ENCODE measurements at regions of chr3 and their contacts with region 1.

Region 1: GRCh38 chr3:107740992-107741896 is 218.5 kb downstream of the BBX start:
- DNase-seq: no peak
- H3K4me3 Mint-ChIP-seq: no peak overlapping the region
- H3K27ac Mint-ChIP-seq: no peak overlapping the region
- H3K4me1 Mint-ChIP-seq: no peaks in the 10 kb centered on the region
- H3K27me3 Mint-ChIP-seq: no peaks in the 10 kb centered on the region
- CTCF ChIP-seq: no peak

Region 2: DNA sequence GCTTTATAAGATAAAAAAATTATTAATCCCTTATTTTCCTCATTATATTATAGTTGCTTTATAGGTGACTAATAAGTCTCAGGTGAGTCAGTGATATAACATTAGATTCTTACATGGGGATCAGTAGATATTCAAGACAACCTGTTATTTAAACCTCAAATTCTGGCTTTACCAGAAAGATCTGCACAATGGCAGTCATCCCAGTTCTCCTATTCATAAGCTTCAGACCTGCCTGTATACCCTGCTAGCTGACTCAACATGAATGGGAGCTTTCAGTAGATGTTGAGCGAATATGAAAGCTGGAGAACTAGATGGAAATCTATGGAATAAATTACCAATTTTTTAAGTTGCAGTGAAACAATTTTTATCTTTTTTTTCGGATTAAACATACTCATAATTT is 384.5 kb before region 1 on chr3:
- CTCF ChIA-PET with region 1: no interaction called
- intact Hi-C with region 1: no loop called
- DNase-seq: no peak
- H3K4me3 Mint-ChIP-seq: no peak overlapping the region
- H3K27ac Mint-ChIP-seq: no peak overlapping the region
- H3K4me1 Mint-ChIP-seq: no peaks in the 10 kb centered on the region
- H3K27me3 Mint-ChIP-seq: no peaks in the 10 kb centered on the region
- CTCF ChIP-seq: no peak

Region 3: DNA sequence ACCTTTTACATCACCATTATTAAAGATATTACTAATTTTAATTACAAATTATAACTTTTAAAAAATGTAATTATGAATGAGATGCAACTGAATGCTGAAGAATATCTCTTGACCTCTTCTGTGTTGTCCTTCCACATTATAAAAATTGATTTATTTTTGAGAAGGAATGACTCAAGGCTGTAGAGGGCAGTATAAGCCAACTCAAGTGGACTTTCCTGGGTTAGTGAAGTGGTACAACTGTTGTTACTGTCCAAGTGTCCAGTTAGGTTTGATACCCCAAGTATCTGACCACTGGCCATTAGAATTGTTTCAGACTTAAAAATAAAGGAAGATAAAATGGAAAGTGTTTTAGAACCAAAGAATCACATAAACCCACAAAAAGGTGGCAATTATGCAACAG is 166.6 kb before region 1 on chr3:
- CTCF ChIA-PET with region 1: no interaction called
- intact Hi-C with region 1: loop called (anchors 10 kb)
- DNase-seq: no peak
- H3K4me3 Mint-ChIP-seq: no peak overlapping the region
- H3K27ac Mint-ChIP-seq: no peak overlapping the region
- H3K4me1 Mint-ChIP-seq: no peaks in the 10 kb centered on the region
- H3K27me3 Mint-ChIP-seq: no peaks in the 10 kb centered on the region
- CTCF ChIP-seq: peak; percentile 29

Region 4: GRCh38 chr3:107676469-107677309 is 64.6 kb before region 1 on chr3:
- CTCF ChIA-PET with region 1: interaction called, 8 read pairs
- intact Hi-C with region 1: loop called (anchors 5 kb)
- DNase-seq: no peak
- H3K4me3 Mint-ChIP-seq: no peak overlapping the region
- H3K27ac Mint-ChIP-seq: no peak overlapping the region
- H3K4me1 Mint-ChIP-seq: peaks cover 11% of the 10 kb centered on the region
- H3K27me3 Mint-ChIP-seq: no peaks in the 10 kb centered on the region
- CTCF ChIP-seq: peak; percentile 54

Region 5: DNA sequence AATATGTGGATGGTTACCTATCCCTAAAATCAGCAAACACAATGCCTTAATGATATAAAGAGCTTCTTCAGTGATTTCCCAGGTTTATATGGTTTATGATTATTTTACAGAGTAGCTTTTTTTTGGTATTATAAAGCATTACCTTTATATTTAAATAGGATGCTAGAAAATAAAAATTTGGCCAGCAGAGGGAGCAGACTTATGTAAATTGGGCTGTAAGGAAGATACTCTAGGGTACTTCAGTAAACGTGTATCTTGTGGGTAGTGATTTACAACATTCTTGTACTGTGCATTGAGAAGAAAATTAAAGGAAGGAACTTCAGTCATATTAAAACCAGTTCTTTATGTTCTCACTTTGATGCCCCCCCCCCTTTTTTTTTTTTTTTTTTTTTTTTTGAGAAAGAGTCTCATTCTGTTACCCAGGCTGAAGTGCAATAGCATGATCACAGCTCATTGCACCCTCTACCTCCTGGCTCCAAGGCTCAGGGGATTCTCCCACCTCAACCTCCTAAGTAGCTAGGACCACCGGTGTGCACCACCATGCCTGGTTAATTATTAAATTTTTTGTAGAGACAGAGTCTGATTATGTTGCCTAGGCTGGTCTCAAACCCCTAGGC is 50.6 kb before region 1 on chr3:
- CTCF ChIA-PET with region 1: interaction called, 4 read pairs
- intact Hi-C with region 1: loop called (anchors 5 kb)
- DNase-seq: no peak
- H3K4me3 Mint-ChIP-seq: no peak overlapping the region
- H3K27ac Mint-ChIP-seq: no peak overlapping the region
- H3K4me1 Mint-ChIP-seq: no peaks in the 10 kb centered on the region
- H3K27me3 Mint-ChIP-seq: no peaks in the 10 kb centered on the region
- CTCF ChIP-seq: no peak

Region 6: DNA sequence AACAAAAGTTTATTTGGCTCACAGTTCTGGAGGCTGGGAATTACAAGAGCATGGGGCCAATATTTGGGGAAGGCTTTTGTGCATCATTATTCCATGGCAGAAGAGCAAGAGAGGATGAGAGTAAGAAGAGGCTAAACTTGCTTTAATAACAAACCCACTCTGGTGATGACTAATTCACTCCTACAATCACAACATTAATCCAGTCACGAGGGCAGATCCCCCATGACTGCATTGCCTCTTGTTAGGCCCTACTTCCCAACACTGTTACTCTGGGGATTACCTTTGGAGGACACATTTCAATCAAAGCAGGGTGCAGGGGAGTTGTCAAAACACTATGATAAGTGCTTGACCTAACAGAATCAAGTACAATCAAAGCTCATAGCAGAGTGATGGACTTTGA is 36.8 kb before region 1 on chr3:
- CTCF ChIA-PET with region 1: no interaction called
- intact Hi-C with region 1: no loop called
- DNase-seq: no peak
- H3K4me3 Mint-ChIP-seq: no peak overlapping the region
- H3K27ac Mint-ChIP-seq: no peak overlapping the region
- H3K4me1 Mint-ChIP-seq: peaks cover 10% of the 10 kb centered on the region
- H3K27me3 Mint-ChIP-seq: no peaks in the 10 kb centered on the region
- CTCF ChIP-seq: no peak

Region 7: DNA sequence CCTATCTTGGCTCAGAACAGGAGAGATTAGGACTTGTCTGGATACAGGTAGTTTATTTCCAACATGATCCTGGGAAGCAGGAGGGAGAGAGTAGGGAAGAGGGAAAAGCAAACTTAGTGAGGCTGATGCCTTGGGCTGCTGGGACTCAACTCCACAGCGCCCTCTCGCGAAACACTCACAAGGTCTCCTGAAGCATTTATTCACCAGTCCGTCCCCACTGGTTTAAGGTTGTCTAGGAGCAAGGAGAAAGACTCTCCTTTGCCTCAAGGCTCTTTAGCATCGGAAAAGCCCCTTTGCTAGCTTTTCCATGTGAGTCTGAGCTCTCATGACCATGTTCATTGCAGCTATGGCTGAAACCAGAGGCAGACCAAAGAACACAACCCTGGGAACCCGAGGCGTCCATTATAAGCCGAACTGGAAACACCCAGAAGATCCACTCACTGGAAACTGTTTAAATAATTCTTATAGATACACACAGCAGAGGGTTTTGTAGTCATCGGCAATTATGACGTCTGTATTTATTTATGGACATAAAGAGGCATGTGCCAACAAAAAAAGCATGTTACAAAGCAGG is 105.1 kb after region 1 on chr3:
- CTCF ChIA-PET with region 1: no interaction called
- intact Hi-C with region 1: no loop called
- DNase-seq: peak; percentile 74
- H3K4me3 Mint-ChIP-seq: no peak overlapping the region
- H3K27ac Mint-ChIP-seq: no peak overlapping the region
- H3K4me1 Mint-ChIP-seq: peaks cover 11% of the 10 kb centered on the region
- H3K27me3 Mint-ChIP-seq: no peaks in the 10 kb centered on the region
- CTCF ChIP-seq: peak; percentile 67

Region 8: GRCh38 chr3:108589146-108589997 is 848.1 kb after region 1 on chr3 and contains the starts of genes CIP2A and DZIP3:
- CTCF ChIA-PET with region 1: no interaction called
- intact Hi-C with region 1: no loop called
- DNase-seq: peak; percentile 90
- H3K4me3 Mint-ChIP-seq: peak within 1 kb of the TSS; percentile 92
- H3K27ac Mint-ChIP-seq: peak within 1 kb of the TSS; percentile 96
- H3K4me1 Mint-ChIP-seq: peaks cover 38% of the 10 kb centered on the region
- H3K27me3 Mint-ChIP-seq: no peaks in the 10 kb centered on the region
- CTCF ChIP-seq: no peak
- total RNA-seq, gene CIP2A: 36.9 and 38.5 TPM in 2 replicates
- total RNA-seq, gene DZIP3: 10.6 and 12.2 TPM in 2 replicates